ENCODE measurements at regions of chr5 and their contacts with region 1.

Region 1: GRCh38 chr5:88729084-88729828 is 153.7 kb downstream of the MEF2C start:
- DNase-seq: peak; percentile 73
- ATAC-seq: peak; percentile 46
- H3K4me3 ChIP-seq: no peak overlapping the region
- H3K27ac ChIP-seq: no peak overlapping the region
- H3K4me1 ChIP-seq: peaks cover 34% of the 10 kb centered on the region
- H3K27me3 ChIP-seq: no peaks in the 10 kb centered on the region
- CTCF ChIP-seq: peak; percentile 54 to 77 (median 58); a peak in 5 of 6 replicates
- EP300 ChIP-seq: no peak
- POLR2A ChIP-seq: no peak
- RAD21 ChIP-seq: peak; percentile 85

Region 2: DNA sequence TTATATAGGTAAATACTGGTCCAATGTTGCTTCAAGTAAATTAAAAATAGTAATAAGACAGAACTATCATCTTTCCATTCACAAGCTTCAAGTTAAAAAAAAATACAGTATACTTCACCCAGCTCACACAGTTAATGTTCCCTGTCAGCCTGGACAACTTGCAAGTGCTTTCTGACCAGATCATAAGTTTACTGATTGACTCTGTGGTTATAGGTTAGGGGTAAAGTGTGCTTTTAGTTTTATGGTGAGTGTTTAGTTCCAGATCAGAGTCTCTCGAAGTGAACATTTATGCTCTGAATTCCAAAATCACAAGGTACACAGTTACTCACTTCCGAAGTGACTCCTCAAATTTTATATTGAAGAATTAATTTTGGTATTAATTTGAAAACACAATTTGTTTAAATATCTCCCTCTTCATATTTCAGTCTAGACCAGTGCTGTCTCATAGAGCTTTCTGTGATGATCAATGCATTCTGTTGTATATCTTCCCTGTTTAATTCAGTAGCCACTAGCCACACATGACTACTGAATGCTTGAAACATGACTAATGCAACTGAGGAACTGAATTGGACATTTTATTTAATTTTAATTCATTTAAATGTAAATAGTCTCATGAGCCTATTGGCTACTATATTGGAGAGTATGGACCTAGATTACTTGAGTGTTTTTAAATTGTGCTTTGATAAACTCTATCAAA is 63.0 kb after region 1 on chr5:
- CTCF ChIA-PET with region 1: interaction called, 39 read pairs
- POLR2A ChIA-PET with region 1: interaction called, 5 read pairs
- RAD21 ChIA-PET with region 1: interaction called, 14 read pairs
- SMC1A ChIA-PET with region 1: interaction called, 65 read pairs
- in situ Hi-C with region 1: no loop called
- intact Hi-C with region 1: no loop called
- DNase-seq: no peak
- ATAC-seq: peak; percentile 89
- H3K4me3 ChIP-seq: no peak overlapping the region
- H3K27ac ChIP-seq: no peak overlapping the region
- H3K4me1 ChIP-seq: peaks cover 1% of the 10 kb centered on the region; the same call in 1 of the 2 replicates
- H3K27me3 ChIP-seq: no peaks in the 10 kb centered on the region
- CTCF ChIP-seq: no peak
- EP300 ChIP-seq: no peak
- POLR2A ChIP-seq: no peak
- RAD21 ChIP-seq: no peak

Region 3: GRCh38 chr5:88875341-88876234 is 146.3 kb after region 1 on chr5:
- CTCF ChIA-PET with region 1: interaction called, 18 read pairs
- POLR2A ChIA-PET with region 1: interaction called, 3 read pairs
- RAD21 ChIA-PET with region 1: interaction called, 99 read pairs
- SMC1A ChIA-PET with region 1: interaction called, 32 read pairs
- in situ Hi-C with region 1: no loop called
- intact Hi-C with region 1: no loop called
- DNase-seq: no peak
- ATAC-seq: peak; percentile 65
- H3K4me3 ChIP-seq: peak overlapping the region; percentile 65
- H3K27ac ChIP-seq: peak overlapping the region; percentile 67
- H3K4me1 ChIP-seq: no peaks in the 10 kb centered on the region
- H3K27me3 ChIP-seq: no peaks in the 10 kb centered on the region
- CTCF ChIP-seq: no peak
- EP300 ChIP-seq: no peak
- POLR2A ChIP-seq: peak; percentile 22; the same call in 1 of the 2 replicates
- RAD21 ChIP-seq: no peak

Region 4: DNA sequence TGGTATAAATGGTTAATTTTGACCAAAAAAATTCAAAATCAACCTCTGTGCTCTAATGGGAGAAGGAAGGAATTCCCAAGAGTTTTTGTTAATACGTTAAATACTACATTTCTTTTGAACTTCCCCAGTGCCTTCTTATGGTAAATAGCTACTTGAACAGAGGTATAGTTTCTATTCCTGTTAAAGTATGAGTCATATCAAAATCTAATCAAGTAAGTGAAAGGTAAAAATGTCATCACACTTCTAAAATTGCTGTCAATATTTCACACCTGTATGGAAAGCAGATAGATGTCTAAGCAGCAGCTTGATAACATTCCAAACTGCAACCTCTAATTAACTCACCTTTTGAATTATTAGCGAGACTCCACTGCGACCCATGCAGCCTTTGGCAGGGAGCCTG is 367.8 kb after region 1 on chr5:
- CTCF ChIA-PET with region 1: interaction called, 17 read pairs
- POLR2A ChIA-PET with region 1: no interaction called
- RAD21 ChIA-PET with region 1: interaction called, 4 read pairs
- SMC1A ChIA-PET with region 1: interaction called, 13 read pairs
- in situ Hi-C with region 1: no loop called
- intact Hi-C with region 1: no loop called
- DNase-seq: peak; percentile 52
- ATAC-seq: peak; percentile 88
- H3K4me3 ChIP-seq: peak overlapping the region; percentile 26; the same call in 1 of the 2 replicates
- H3K27ac ChIP-seq: peak overlapping the region; percentile 52
- H3K4me1 ChIP-seq: peaks cover 12% of the 10 kb centered on the region
- H3K27me3 ChIP-seq: no peaks in the 10 kb centered on the region
- CTCF ChIP-seq: no peak
- EP300 ChIP-seq: peak; percentile 87 to 95
- POLR2A ChIP-seq: no peak
- RAD21 ChIP-seq: no peak

Region 5: DNA sequence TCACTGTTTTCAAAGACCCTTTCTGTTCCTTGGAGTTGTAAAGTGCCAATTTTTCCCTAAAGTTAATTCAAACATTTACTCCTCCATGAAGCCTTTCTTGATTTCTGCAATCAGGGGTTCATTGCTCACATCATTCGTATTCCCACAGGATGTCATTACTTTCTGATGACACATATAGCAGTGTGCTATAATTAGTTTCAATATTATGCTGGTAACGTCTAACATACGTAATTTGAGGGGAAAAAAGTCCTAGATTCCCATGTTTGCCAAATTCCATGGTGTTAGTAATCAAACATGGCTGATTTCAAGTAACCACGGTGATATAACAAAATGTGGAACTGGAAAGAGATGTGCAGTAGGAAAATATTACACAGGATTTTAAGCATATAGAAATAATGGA is 622.0 kb after region 1 on chr5:
- CTCF ChIA-PET with region 1: interaction called, 3 read pairs
- POLR2A ChIA-PET with region 1: no interaction called
- RAD21 ChIA-PET with region 1: interaction called, 6 read pairs
- SMC1A ChIA-PET with region 1: interaction called, 11 read pairs
- in situ Hi-C with region 1: no loop called
- intact Hi-C with region 1: no loop called
- DNase-seq: no peak
- ATAC-seq: peak; percentile 16
- H3K4me3 ChIP-seq: no peak overlapping the region
- H3K27ac ChIP-seq: peak overlapping the region; percentile 68; the same call in 1 of the 2 replicates
- H3K4me1 ChIP-seq: peaks cover 18% of the 10 kb centered on the region; the same call in 1 of the 2 replicates
- H3K27me3 ChIP-seq: no peaks in the 10 kb centered on the region
- CTCF ChIP-seq: no peak
- EP300 ChIP-seq: 0 out of 4 replicates have a peak, but pooled peaks of 1 of the 2 experiments have one; percentile 54
- POLR2A ChIP-seq: no peak
- RAD21 ChIP-seq: no peak

Region 6: DNA sequence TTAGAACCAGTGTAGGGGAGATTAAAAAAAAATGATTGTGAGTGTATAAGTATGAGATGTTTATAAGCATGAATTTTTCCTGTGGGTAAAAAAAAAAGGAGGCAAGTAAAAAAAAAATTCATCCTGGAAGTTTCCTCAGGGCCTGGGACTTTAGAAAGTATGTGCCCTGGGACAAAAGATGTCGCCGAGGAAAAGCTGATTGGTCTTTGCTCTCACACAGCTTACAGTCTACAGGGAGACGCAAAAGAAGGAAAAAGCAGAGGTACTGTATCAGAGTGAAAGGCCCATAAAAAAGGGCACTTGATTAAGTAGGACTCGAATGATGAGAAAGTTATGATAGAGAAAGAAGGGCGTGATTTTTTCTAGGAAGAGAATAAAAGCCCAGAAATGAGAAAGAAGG is 655.1 kb after region 1 on chr5:
- CTCF ChIA-PET with region 1: no interaction called
- POLR2A ChIA-PET with region 1: no interaction called
- RAD21 ChIA-PET with region 1: no interaction called
- SMC1A ChIA-PET with region 1: no interaction called
- in situ Hi-C with region 1: no loop called
- intact Hi-C with region 1: no loop called
- DNase-seq: no peak
- ATAC-seq: no peak
- H3K4me3 ChIP-seq: no peak overlapping the region
- H3K27ac ChIP-seq: no peak overlapping the region
- H3K4me1 ChIP-seq: no peaks in the 10 kb centered on the region
- H3K27me3 ChIP-seq: no peaks in the 10 kb centered on the region
- CTCF ChIP-seq: no peak
- EP300 ChIP-seq: no peak
- POLR2A ChIP-seq: no peak
- RAD21 ChIP-seq: no peak

Region 7: GRCh38 chr5:90020575-90021539 is 1291.6 kb after region 1 on chr5:
- CTCF ChIA-PET with region 1: no interaction called
- POLR2A ChIA-PET with region 1: no interaction called
- RAD21 ChIA-PET with region 1: no interaction called
- SMC1A ChIA-PET with region 1: no interaction called
- in situ Hi-C with region 1: loop called (anchors 10 kb)
- intact Hi-C with region 1: loop called (anchors 5 kb)
- DNase-seq: peak; percentile 87
- ATAC-seq: peak; percentile 98
- H3K4me3 ChIP-seq: no peak overlapping the region
- H3K27ac ChIP-seq: peak overlapping the region; percentile 56
- H3K4me1 ChIP-seq: peaks cover 10% of the 10 kb centered on the region
- H3K27me3 ChIP-seq: no peaks in the 10 kb centered on the region
- CTCF ChIP-seq: no peak
- EP300 ChIP-seq: peak; percentile 63 to 82
- POLR2A ChIP-seq: no peak
- RAD21 ChIP-seq: peak; percentile 26; the same call in 1 of the 2 replicates